GM10248 (cell line): ENCODE measurements at regions of chr2 and their contacts with region 1.

Region 1: GRCh38 chr2:190563109-190563508 is 28.6 kb upstream of the NEMP2 start:
- DNase-seq: no peak
- CTCF ChIP-seq: no peak

Region 2: DNA sequence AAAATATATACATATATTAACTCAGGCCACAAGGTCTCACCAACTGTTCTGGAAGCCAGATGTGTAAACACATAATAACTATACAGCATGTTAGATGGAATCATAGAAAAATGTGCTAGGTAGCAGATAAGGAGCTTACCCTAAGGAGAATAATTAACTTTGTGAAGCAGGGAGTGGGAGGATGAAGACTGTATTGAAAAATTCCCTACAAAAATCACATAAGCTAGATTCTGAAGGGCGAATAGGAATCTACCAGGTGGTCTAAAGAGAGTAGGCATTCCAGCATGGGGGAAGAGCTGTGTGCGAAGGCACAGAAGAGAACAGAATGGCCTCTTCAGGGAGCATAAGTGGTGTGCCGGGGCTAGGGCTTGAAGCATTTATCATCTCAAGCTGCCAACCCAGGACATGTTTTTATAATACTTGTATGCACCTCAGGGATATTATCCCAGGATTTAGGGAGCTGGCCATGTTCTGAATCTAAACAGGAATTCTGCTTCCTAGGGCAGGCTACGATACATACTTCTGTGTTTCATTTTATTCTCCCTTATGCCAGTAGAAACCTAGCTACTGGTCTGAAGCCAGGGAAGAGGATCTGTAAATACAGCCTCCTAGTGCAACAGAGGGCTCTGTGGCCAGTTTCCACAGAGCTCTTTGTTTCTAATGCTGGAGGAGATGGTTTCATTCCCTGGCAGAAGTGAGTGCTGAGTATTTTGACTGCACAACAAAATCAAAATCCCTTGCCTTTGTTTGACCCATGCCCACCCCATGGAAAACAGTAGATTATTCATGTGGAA is 85.3 kb before region 1 on chr2:
- CTCF ChIA-PET with region 1: no interaction called
- POLR2A ChIA-PET with region 1: no interaction called
- DNase-seq: no peak
- CTCF ChIP-seq: no peak

Region 3: GRCh38 chr2:190511104-190511503 is 52.0 kb before region 1 on chr2:
- CTCF ChIA-PET with region 1: no interaction called
- POLR2A ChIA-PET with region 1: no interaction called
- DNase-seq: no peak
- CTCF ChIP-seq: peak; percentile 31

Region 4: GRCh38 chr2:190551928-190552327 is 11.2 kb before region 1 on chr2:
- CTCF ChIA-PET with region 1: interaction called, 21 read pairs
- POLR2A ChIA-PET with region 1: no interaction called
- DNase-seq: peak; percentile 25
- CTCF ChIP-seq: no peak